CD8-positive, alpha-beta memory T cell (primary cell): ENCODE measurements at regions of chr6 and their contacts with region 1.

Region 1: GRCh38 chr6:2900821-2901644 is 2.1 kb downstream of the SERPINB9 start:
- DNase-seq: no peak
- H3K4me3 ChIP-seq: peak overlapping the region; percentile 95
- H3K4me3 Mint-ChIP-seq: peak overlapping the region; percentile 94 to 100 (median 100)
- H3K27ac ChIP-seq: peak overlapping the region; percentile 83
- H3K27ac Mint-ChIP-seq: peak overlapping the region; percentile 93 to 100 (median 98)
- H3K4me1 ChIP-seq: peaks cover 54% of the 10 kb centered on the region
- H3K4me1 Mint-ChIP-seq: peaks cover 51 to 58% (median 57%) of the 10 kb centered on the region in 3 donors
- H3K27me3 ChIP-seq: no peaks in the 10 kb centered on the region
- H3K27me3 Mint-ChIP-seq: no peaks in the 10 kb centered on the region

Region 2: GRCh38 chr6:2841264-2842138 is 59.5 kb before region 1 on chr6 and contains the start of gene SERPINB1:
- CTCF ChIA-PET with region 1: interaction called, 35 read pairs
- POLR2A ChIA-PET with region 1: interaction called, 12 read pairs
- DNase-seq: peak; percentile 55 to 82 (median 69)
- H3K4me3 ChIP-seq: peak within 1 kb of the TSS; percentile 82
- H3K4me3 Mint-ChIP-seq: peak within 1 kb of the TSS; percentile 88 to 95 (median 90)
- H3K27ac ChIP-seq: peak within 1 kb of the TSS; percentile 82
- H3K27ac Mint-ChIP-seq: peak within 1 kb of the TSS; percentile 90 to 98 (median 94)
- H3K4me1 ChIP-seq: peaks cover 33% of the 10 kb centered on the region
- H3K4me1 Mint-ChIP-seq: peaks cover 43 to 60% (median 52%) of the 10 kb centered on the region in 3 donors
- H3K27me3 ChIP-seq: no peaks in the 10 kb centered on the region
- H3K27me3 Mint-ChIP-seq: no peaks in the 10 kb centered on the region
- total RNA-seq, gene SERPINB1: 40.4 to 42.4 TPM

Region 3: GRCh38 chr6:2848851-2849250 is 52.2 kb before region 1 on chr6:
- CTCF ChIA-PET with region 1: interaction called, 35 read pairs
- POLR2A ChIA-PET with region 1: interaction called, 8 read pairs
- DNase-seq: peak; percentile 19 to 77 (median 55)
- H3K4me3 ChIP-seq: no peak overlapping the region
- H3K4me3 Mint-ChIP-seq: peak overlapping the region in 5 of 7 donors; percentile 4 to 62 (median 30)
- H3K27ac ChIP-seq: no peak overlapping the region
- H3K27ac Mint-ChIP-seq: peak overlapping the region in 7 of 8 donors; percentile 1 to 94 (median 89)
- H3K4me1 ChIP-seq: peaks cover 31% of the 10 kb centered on the region
- H3K4me1 Mint-ChIP-seq: peaks cover 32 to 44% (median 34%) of the 10 kb centered on the region in 3 donors
- H3K27me3 ChIP-seq: no peaks in the 10 kb centered on the region
- H3K27me3 Mint-ChIP-seq: no peaks in the 10 kb centered on the region

Region 4: GRCh38 chr6:2857580-2858337 is 43.3 kb before region 1 on chr6:
- CTCF ChIA-PET with region 1: interaction called, 11 read pairs
- POLR2A ChIA-PET with region 1: interaction called, 9 read pairs
- DNase-seq: peak; percentile 49 to 90 (median 72)
- H3K4me3 ChIP-seq: peak overlapping the region; percentile 35
- H3K4me3 Mint-ChIP-seq: peak overlapping the region; percentile 81 to 89 (median 84)
- H3K27ac ChIP-seq: peak overlapping the region; percentile 85
- H3K27ac Mint-ChIP-seq: peak overlapping the region; percentile 91 to 100 (median 99)
- H3K4me1 ChIP-seq: peaks cover 88% of the 10 kb centered on the region
- H3K4me1 Mint-ChIP-seq: peaks cover 85 to 96% (median 88%) of the 10 kb centered on the region in 3 donors
- H3K27me3 ChIP-seq: no peaks in the 10 kb centered on the region
- H3K27me3 Mint-ChIP-seq: peaks cover 0 to 1% of the 10 kb centered on the region in 2 donors

Region 5: GRCh38 chr6:2876210-2877056 is 24.6 kb before region 1 on chr6:
- CTCF ChIA-PET with region 1: interaction called, 12 read pairs
- POLR2A ChIA-PET with region 1: interaction called, 11 read pairs
- DNase-seq: peak in 1 of 5 donors; percentile 25
- H3K4me3 ChIP-seq: peak overlapping the region; percentile 34
- H3K4me3 Mint-ChIP-seq: peak overlapping the region; percentile 74 to 95 (median 85)
- H3K27ac ChIP-seq: no peak overlapping the region
- H3K27ac Mint-ChIP-seq: peak overlapping the region; percentile 88 to 98 (median 95)
- H3K4me1 ChIP-seq: peaks cover 64% of the 10 kb centered on the region
- H3K4me1 Mint-ChIP-seq: peaks cover 71 to 85% (median 83%) of the 10 kb centered on the region in 3 donors
- H3K27me3 ChIP-seq: no peaks in the 10 kb centered on the region
- H3K27me3 Mint-ChIP-seq: no peaks in the 10 kb centered on the region

Region 6: DNA sequence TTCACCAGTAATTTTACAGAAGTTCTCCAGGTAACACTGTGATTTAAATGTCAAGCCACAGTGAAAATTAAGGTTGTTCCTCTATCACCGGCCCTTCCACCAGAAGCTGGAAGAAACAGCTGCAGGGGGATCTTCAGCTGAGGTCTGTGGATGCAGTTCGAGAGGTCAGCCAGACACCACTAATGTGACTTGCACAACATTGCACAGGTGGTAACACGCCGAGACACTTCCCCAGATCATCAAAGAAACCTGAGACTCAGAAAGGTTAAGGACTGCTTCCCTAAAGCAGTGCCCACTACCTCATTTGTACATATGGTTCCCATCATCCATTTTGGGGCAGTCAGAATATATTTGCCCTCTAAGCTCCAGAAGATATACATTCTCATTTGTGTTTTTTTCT is 10.1 kb after region 1 on chr6:
- CTCF ChIA-PET with region 1: interaction called, 15 read pairs
- POLR2A ChIA-PET with region 1: interaction called, 4 read pairs
- DNase-seq: no peak
- H3K4me3 ChIP-seq: no peak overlapping the region
- H3K4me3 Mint-ChIP-seq: no peak overlapping the region
- H3K27ac ChIP-seq: no peak overlapping the region
- H3K27ac Mint-ChIP-seq: no peak overlapping the region
- H3K4me1 ChIP-seq: no peaks in the 10 kb centered on the region
- H3K4me1 Mint-ChIP-seq: peaks cover 8 to 22% (median 22%) of the 10 kb centered on the region in 3 donors
- H3K27me3 ChIP-seq: no peaks in the 10 kb centered on the region
- H3K27me3 Mint-ChIP-seq: no peaks in the 10 kb centered on the region